ENCODE measurements at regions of chr11 and their contacts with region 1.

Region 1: GRCh38 chr11:20131788-20132666 is 28.2 kb downstream of the DBX1 start:
- DNase-seq: peak; percentile 76 to 86 (median 81)
- H3K4me3 ChIP-seq: peak overlapping the region; percentile 22 to 72 (median 72)
- H3K27ac ChIP-seq: no peak overlapping the region
- H3K4me1 ChIP-seq: peaks cover 0 to 6% (median 5%) of the 10 kb centered on the region in 3 donors
- H3K27me3 ChIP-seq: peaks cover 9% of the 10 kb centered on the region
- CTCF ChIP-seq: peak; percentile 81

Region 2: DNA sequence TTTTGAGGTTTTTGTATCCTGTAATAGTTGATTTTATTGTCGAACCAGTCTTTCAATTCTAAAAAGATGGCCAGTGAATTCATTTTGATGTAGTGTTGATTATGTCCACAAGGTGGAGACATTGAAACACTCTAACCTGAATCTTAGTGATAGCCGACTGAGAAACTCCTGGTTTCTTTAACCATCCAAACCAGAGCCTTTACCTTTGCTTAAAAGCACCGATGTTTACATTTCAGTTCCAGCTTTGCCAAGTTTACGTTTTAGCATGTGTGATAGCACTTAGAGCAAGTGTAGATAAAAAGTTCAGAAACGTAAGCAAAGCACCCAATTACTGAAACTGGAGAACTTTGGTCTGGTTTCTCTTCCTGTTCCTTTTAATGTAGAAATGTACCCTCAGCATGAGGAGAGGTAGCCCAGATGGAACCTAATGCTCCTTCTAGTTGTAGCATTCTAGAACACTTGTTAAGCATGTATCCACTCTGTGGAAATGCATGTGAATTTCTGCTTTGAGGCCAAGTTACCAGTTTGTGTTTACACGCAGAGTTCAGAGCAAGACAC is 180.4 kb before region 1 on chr11:
- intact Hi-C with region 1: loop called (anchors 10 kb)
- DNase-seq: peak in 2 of 5 donors; percentile 86 to 89
- H3K4me3 ChIP-seq: peak overlapping the region in 1 of 3 donors; percentile 32
- H3K27ac ChIP-seq: no peak overlapping the region
- H3K4me1 ChIP-seq: peaks cover 0 to 3% (median 2%) of the 10 kb centered on the region in 3 donors
- H3K27me3 ChIP-seq: no peaks in the 10 kb centered on the region
- CTCF ChIP-seq: peak; percentile 57

Region 3: DNA sequence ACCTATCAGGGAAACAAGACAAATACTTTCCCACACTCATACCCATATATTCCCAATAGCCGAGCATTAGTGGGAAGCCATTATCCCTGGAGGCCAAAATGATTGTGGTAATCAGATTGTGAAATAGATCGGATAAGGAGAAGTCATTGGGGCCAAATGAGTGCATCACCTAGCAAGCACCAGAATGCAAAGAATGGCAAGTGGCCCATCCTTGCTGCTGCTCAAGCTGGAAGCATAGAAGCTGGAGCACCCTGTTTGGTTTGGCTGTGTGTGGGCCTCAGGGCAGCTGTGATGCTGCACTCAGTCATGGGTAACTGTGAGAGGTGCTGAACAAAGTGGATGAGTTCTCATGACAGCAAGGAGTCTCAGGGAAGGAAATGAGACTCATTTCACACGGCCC is 47.0 kb after region 1 on chr11:
- intact Hi-C with region 1: no loop called
- DNase-seq: no peak
- H3K4me3 ChIP-seq: no peak overlapping the region
- H3K27ac ChIP-seq: no peak overlapping the region
- H3K4me1 ChIP-seq: no peaks in the 10 kb centered on the region
- H3K27me3 ChIP-seq: no peaks in the 10 kb centered on the region
- CTCF ChIP-seq: no peak

Region 4: DNA sequence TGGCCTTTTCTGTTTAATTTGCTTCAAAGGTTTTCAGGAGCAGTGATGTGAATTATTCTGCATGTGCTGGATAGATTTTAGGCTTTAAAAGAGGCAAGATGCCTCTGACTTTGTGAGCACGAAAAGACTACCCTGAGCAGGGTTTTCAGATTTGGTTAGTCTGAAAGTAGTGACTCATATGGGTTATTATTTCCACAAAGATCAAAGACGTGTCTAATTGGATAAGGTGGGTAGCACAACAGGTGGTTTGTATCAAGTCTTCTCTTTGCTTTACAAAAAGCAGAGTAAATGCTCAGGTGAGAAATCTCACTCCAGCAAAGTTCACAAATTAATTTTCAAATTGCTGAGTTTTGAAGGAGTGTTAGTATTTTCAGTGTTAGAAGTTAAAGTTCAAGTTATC is 65.9 kb after region 1 on chr11:
- intact Hi-C with region 1: no loop called
- DNase-seq: no peak
- H3K4me3 ChIP-seq: no peak overlapping the region
- H3K27ac ChIP-seq: no peak overlapping the region
- H3K4me1 ChIP-seq: no peaks in the 10 kb centered on the region
- H3K27me3 ChIP-seq: no peaks in the 10 kb centered on the region
- CTCF ChIP-seq: no peak

Region 5: DNA sequence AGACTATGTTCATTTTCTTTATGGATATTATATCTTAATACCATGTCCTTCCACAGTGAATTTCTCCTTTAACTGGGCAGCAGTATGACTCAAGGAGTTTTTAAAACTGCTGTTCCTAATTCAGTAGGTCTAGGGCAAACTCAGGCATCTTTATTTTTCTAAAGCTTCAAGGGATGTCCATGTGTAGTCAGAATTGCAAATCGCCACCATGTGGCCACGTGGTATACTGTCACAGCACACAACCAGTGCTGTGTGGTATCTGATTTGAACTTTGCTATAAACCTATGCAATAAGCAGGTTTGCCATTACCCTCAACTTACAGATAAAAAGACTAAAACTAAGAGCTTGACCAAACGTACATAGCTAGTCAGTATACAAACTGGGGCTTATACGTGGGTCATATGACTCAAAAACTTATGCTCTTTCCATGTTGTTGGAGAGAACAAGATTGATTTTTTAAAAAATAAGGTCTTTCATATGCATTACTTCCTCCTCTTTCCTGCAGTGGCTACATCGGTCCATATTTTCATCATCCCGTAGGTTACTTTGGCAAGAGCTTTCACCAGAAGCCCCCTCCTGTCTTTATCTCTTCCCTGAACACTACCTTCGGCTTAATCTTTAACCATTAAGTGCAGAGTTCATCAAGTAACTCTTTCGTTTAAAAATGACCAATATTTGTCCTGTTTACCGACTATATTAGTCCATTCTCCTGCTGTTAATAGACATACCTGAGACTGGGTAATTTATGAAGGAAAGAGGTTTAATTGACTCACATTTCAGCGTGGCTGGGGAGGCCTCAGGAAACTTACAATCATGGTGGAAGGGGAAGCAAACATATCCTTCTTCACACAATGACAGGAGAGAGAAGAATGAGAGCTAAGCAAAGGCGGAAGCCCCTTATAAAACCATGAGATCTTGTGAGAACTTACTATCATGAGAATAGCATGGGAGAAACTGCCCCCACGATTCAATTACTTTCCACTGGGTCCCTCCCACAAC is 223.5 kb after region 1 on chr11:
- intact Hi-C with region 1: loop called (anchors 10 kb)
- DNase-seq: peak in 3 of 5 donors; percentile 24 to 51 (median 36)
- H3K4me3 ChIP-seq: no peak overlapping the region
- H3K27ac ChIP-seq: no peak overlapping the region
- H3K4me1 ChIP-seq: no peaks in the 10 kb centered on the region
- H3K27me3 ChIP-seq: no peaks in the 10 kb centered on the region
- CTCF ChIP-seq: peak; percentile 62